CD8-positive, alpha-beta T cell (primary cell): ENCODE measurements at regions of chr2 and their contacts with region 1.

Region 1: DNA sequence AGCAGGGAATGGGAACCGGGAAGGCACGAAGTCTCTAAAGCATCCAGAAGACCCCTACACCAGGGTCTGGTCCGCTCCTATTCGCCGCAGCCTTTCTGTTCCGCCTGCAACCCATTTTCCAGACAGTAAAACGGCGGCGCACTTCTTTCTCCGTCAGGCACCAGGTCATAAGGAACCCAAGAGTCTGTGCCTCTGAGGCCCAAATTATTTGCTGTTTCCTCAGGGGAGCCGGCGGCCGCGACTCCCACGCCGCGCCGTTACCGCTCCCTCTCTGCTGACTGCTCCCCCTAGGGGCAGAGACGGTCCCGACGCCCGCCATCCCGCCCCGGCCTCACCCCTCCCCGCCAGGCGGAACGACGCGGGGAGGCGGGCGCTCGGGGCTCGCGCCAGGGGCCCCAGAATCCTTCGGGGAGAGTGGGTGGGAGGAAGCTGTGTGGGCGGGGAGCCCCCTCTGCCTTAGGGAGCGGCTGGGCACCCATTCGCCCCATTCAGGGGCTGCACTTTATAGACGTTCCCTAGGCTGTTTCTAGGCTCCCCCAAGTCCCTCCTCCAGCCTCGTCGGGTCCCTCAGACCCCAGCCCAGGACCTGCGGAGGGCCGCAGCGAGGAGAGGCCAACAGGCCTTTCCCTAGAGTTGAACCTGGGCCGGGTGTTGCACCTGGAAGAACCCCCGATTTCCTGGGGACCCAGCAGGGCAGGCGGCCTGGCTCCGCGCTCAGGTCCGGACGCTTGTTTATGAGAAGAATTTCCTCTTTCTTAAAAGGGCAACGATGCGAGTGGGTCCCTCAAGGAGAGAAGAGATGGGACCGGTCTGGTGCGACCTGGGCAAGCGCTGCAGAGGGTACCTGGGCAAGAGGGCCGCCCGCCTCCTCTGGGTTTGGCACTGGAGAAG is 3.6 kb upstream of the CTDSP1 start:
- DNase-seq: peak; percentile 87 to 98 (median 94)
- ATAC-seq: peak; percentile 74
- H3K4me3 ChIP-seq: peak overlapping the region; percentile 83 to 99
- H3K4me3 Mint-ChIP-seq: peak overlapping the region; percentile 95
- H3K27ac ChIP-seq: peak overlapping the region; percentile 92 to 98
- H3K27ac Mint-ChIP-seq: peak overlapping the region; percentile 98
- H3K4me1 ChIP-seq: peaks cover 40% of the 10 kb centered on the region
- H3K4me1 Mint-ChIP-seq: peaks cover 43% of the 10 kb centered on the region
- H3K27me3 ChIP-seq: no peaks in the 10 kb centered on the region
- H3K27me3 Mint-ChIP-seq: no peaks in the 10 kb centered on the region
- CTCF ChIP-seq: peak; percentile 83

Region 2: DNA sequence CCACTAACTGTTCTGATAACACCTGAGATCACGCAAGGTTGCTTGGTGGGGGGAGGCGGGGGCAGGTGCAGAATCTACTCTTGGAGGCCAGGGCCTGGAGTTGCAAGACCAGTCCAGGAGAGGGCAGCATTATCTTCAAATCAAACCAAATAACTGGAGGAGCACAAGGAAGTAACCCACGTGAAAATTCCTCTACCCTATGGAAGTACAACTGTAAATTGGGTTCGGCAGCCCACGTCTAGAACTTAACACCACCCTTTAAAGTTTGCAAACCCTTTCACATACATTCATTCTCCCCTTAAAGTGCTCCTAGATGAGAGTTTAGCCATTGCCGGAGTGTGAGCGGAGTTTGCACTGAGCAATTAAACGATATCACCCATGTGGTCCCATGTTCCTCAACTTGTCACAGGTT is 209.7 kb before region 1 on chr2:
- CTCF ChIA-PET with region 1: no interaction called
- POLR2A ChIA-PET with region 1: no interaction called
- intact Hi-C with region 1: loop called in 1 of 2 experiments (anchors 10 kb)
- DNase-seq: peak; percentile 48 to 85 (median 71)
- ATAC-seq: peak; percentile 100
- H3K4me3 ChIP-seq: no peak overlapping the region
- H3K4me3 Mint-ChIP-seq: no peak overlapping the region
- H3K27ac ChIP-seq: no peak overlapping the region
- H3K27ac Mint-ChIP-seq: no peak overlapping the region
- H3K4me1 ChIP-seq: peaks cover 8% of the 10 kb centered on the region
- H3K4me1 Mint-ChIP-seq: peaks cover 8% of the 10 kb centered on the region
- H3K27me3 ChIP-seq: no peaks in the 10 kb centered on the region
- H3K27me3 Mint-ChIP-seq: no peaks in the 10 kb centered on the region
- CTCF ChIP-seq: peak; percentile 74

Region 3: DNA sequence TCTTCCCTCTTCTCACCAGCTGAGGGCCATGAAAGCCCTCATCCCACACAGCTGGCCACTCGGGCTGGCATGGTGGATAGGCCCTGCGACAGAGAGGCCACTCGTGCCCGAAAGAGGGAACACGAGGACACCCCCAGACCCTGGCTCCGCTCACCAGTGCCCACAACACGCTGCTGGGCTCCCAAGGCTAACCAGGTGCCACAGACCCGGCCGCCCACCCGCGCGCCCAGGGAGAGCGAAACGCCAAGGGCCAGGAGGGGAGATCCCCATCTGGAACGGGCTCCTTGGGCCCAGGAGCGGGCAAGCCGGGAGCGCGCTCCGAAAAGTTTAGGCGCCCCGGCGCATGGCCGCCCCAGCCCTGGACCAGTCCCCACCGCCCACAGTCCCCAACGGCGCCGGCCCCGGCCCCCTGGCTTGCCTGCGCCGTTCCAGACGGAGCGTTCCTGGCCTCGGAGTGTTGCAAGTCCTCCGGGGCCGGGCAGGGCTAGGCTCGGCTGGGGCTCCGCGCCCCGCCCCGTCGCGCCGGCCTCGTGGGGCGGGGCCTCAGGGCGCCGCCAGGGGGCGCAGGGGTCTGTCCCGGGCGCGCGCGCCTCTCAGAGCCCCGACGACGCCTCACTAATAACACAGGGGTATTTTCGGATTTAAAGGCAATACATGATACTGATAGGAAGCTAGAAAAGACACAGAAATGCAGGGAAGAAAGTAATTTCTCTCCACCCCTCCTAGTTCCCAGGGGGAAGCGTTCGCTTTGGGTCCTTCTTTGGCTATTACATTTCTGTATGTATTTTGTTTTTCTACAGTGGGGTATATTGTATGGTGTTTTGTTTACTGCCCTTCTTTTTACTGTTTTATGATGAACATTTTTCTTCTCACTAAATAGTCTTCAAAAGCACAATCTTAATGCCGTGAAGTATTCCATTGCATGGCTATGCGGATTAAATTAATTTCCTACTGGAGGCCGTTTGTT is 103.7 kb before region 1 on chr2 and contains the start of gene TMBIM1:
- CTCF ChIA-PET with region 1: interaction called, 18 read pairs
- POLR2A ChIA-PET with region 1: interaction called, 23 read pairs
- intact Hi-C with region 1: loop called (anchors 1 to 2 kb)
- DNase-seq: peak; percentile 64 to 91 (median 79)
- ATAC-seq: peak; percentile 82
- H3K4me3 ChIP-seq: peak within 1 kb of the TSS; percentile 79 to 89
- H3K4me3 Mint-ChIP-seq: peak within 1 kb of the TSS; percentile 83
- H3K27ac ChIP-seq: peak within 1 kb of the TSS; percentile 72 to 87
- H3K27ac Mint-ChIP-seq: peak within 1 kb of the TSS; percentile 98
- H3K4me1 ChIP-seq: peaks cover 50% of the 10 kb centered on the region
- H3K4me1 Mint-ChIP-seq: peaks cover 51% of the 10 kb centered on the region
- H3K27me3 ChIP-seq: no peaks in the 10 kb centered on the region
- H3K27me3 Mint-ChIP-seq: no peaks in the 10 kb centered on the region
- CTCF ChIP-seq: peak; percentile 93
- total RNA-seq, gene TMBIM1: 80.8 to 86.7 TPM

Region 4: DNA sequence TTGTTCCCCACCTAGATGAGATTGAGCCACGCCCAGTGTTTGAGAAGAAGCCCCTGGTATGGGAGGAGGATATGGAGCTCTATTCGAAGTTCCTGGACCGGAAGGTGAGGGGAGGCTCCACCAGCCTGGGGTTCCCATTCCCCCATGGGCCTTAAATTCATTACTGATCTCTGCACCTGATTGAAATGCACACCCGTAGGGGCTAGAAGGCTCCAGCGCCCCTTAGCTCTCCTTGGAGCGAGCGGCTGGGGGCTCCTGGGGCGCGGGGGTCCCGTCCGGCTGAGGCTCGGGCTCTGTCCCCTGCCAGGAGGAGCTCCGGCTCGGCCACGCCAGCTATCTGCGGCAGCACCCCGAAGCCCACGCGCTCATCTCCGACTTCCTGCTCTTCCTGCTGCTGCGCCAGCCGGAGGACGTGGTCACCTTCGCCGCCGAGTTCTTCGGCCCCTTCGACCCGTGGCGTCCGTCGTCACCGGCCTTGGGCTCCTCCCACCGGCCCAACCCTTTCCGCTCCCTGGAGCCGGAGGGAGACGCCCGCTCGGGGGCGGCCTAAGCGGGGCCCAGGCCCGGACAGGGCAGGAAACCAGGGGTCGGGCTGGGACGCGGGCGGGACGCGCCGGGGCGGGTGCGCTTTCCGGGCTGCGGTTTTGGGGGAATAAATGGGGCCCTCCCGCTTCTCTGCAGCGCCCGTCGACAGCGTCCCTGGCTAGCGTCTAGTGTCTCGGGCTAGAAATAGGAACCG is 28.5 kb before region 1 on chr2:
- CTCF ChIA-PET with region 1: interaction called, 5 read pairs
- POLR2A ChIA-PET with region 1: interaction called, 7 read pairs
- intact Hi-C with region 1: loop called (anchors 1 to 2 kb)
- DNase-seq: peak; percentile 34 to 84 (median 71)
- ATAC-seq: peak; percentile 83
- H3K4me3 ChIP-seq: peak overlapping the region; percentile 50 to 57
- H3K4me3 Mint-ChIP-seq: peak overlapping the region; percentile 78
- H3K27ac ChIP-seq: peak overlapping the region; percentile 46 to 68
- H3K27ac Mint-ChIP-seq: peak overlapping the region; percentile 89
- H3K4me1 ChIP-seq: peaks cover 26% of the 10 kb centered on the region
- H3K4me1 Mint-ChIP-seq: peaks cover 26% of the 10 kb centered on the region
- H3K27me3 ChIP-seq: no peaks in the 10 kb centered on the region
- H3K27me3 Mint-ChIP-seq: no peaks in the 10 kb centered on the region
- CTCF ChIP-seq: no peak

Region 5: DNA sequence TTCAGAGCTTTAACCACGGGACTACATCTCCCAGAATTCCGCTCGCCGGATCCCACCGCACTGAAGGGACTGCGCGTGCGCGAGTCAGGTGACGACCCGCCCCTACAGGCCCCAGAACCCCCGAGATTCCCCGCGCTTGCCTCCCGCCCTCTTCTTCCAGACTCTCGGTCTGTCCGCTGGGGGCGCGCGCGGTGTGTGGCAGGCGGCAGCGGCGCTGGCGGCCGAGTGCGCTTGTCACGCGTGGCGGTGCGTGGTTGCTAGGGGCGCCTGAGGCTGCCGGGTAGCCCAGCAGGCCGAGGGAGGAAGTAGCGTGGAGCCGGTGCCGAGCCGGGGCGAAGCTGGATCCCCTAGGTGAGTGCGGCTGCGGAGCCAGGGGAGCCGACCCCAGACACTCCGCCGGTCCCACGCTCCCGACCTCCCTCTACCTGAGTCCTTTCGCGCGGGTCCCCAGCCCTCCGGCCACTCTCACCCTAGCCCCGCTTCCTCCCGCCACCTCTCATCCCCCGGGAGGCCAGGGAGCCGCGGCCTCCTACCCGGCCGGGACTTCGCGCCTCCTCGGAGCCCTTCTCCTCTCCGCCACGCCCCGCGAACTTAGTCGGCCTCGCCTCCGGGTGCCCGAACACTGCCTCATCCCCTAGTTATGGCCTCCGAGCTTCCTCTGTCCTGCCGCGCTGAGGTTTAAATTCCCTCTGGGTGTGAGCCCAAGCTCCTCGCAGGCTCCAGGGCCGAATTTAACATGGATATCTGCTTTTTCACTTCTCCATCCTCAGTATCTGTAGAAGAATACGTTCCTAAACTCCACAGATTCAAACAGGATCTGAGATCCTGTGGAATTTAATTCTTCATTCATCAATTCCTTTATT is 314.9 kb after region 1 on chr2 and contains the start of gene TTLL4:
- CTCF ChIA-PET with region 1: no interaction called
- POLR2A ChIA-PET with region 1: interaction called, 3 read pairs
- intact Hi-C with region 1: loop called in 1 of 2 experiments (anchors 5 kb)
- DNase-seq: peak; percentile 97 to 99 (median 99)
- ATAC-seq: peak; percentile 99
- H3K4me3 ChIP-seq: peak within 1 kb of the TSS; percentile 86 to 92
- H3K4me3 Mint-ChIP-seq: peak within 1 kb of the TSS; percentile 91
- H3K27ac ChIP-seq: peak within 1 kb of the TSS; percentile 73 to 90
- H3K27ac Mint-ChIP-seq: peak within 1 kb of the TSS; percentile 84
- H3K4me1 ChIP-seq: peaks cover 13% of the 10 kb centered on the region
- H3K4me1 Mint-ChIP-seq: peaks cover 19% of the 10 kb centered on the region
- H3K27me3 ChIP-seq: no peaks in the 10 kb centered on the region
- H3K27me3 Mint-ChIP-seq: peaks cover 6% of the 10 kb centered on the region
- CTCF ChIP-seq: peak; percentile 76
- total RNA-seq, gene TTLL4: 6.9 to 8.1 TPM

Region 6: GRCh38 chr2:219177552-219178376 is 781.7 kb after region 1 on chr2 and contains the start of gene RETREG2:
- CTCF ChIA-PET with region 1: no interaction called
- POLR2A ChIA-PET with region 1: no interaction called
- intact Hi-C with region 1: loop called in 1 of 2 experiments (anchors 2 kb)
- DNase-seq: peak; percentile 61 to 96 (median 78)
- ATAC-seq: peak; percentile 55
- H3K4me3 ChIP-seq: peak within 1 kb of the TSS; percentile 71 to 82
- H3K4me3 Mint-ChIP-seq: peak within 1 kb of the TSS; percentile 91
- H3K27ac ChIP-seq: peak within 1 kb of the TSS; percentile 97 to 98
- H3K27ac Mint-ChIP-seq: peak within 1 kb of the TSS; percentile 99
- H3K4me1 ChIP-seq: peaks cover 75% of the 10 kb centered on the region
- H3K4me1 Mint-ChIP-seq: peaks cover 75% of the 10 kb centered on the region
- H3K27me3 ChIP-seq: no peaks in the 10 kb centered on the region
- H3K27me3 Mint-ChIP-seq: no peaks in the 10 kb centered on the region
- CTCF ChIP-seq: no peak
- total RNA-seq, gene RETREG2: 76.7 to 79.0 TPM

Region 7: DNA sequence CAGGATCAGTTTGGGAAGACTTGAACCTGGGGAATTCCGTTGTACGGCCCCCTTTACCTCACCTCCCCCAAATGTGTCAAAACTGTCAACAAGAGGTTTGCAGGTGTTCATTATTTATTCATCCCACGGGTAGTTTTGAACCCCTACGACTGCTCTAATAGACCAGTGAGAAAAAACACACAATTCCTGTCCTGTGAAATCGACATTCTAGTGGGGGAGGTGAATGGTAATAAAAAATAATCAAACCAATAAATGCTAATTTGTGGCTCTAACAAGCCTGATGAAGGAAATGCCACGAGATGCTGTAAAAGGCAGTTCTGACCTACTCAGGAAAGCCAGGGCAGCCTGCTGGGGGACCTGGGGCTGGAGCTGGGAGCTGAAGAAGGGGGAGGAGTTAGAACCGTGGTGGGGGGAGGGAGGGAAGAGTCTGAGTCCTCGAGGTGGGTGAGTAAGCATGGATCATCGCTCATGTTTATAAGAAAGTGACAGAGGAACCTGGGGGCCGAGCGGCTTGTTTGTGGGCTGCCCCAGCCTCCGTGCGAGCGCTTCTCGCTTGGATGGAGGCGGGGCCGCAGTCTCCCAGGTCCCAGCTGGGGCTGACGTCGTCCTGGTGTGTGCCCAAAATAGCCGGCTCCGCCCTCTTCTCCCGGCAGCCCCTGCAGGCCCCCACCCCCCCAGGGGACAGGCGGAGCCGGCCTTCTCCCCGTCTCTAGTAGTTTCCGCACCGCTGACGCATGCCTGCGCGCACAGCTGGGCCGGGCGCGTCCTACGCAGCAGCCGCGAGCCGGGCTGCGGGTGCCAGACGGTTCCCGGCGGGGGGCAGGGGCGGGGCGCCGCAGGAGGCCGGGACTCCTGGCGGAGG is 882.8 kb after region 1 on chr2 and contains the start of gene DNAJB2:
- CTCF ChIA-PET with region 1: no interaction called
- POLR2A ChIA-PET with region 1: no interaction called
- intact Hi-C with region 1: loop called in 1 of 2 experiments (anchors 5 kb)
- DNase-seq: peak; percentile 97 to 100 (median 99)
- ATAC-seq: peak; percentile 74
- H3K4me3 ChIP-seq: peak within 1 kb of the TSS; percentile 56 to 76
- H3K4me3 Mint-ChIP-seq: peak within 1 kb of the TSS; percentile 90
- H3K27ac ChIP-seq: peak within 1 kb of the TSS; percentile 98 to 99
- H3K27ac Mint-ChIP-seq: peak within 1 kb of the TSS; percentile 99
- H3K4me1 ChIP-seq: peaks cover 31% of the 10 kb centered on the region
- H3K4me1 Mint-ChIP-seq: peaks cover 38% of the 10 kb centered on the region
- H3K27me3 ChIP-seq: no peaks in the 10 kb centered on the region
- H3K27me3 Mint-ChIP-seq: no peaks in the 10 kb centered on the region
- CTCF ChIP-seq: no peak
- total RNA-seq, gene DNAJB2: 108 to 123 TPM